Activated T-helper 1 cell treated with anti-CD3 and anti-CD28 coated beads, Interleukin-12 subunit alpha, Interleukin-12 subunit beta, Interleukin-2, Interleukin-4 antibody, amounts not matched to agents 30 ng/mL and 10 ng/mL and 1 ng/mL, durations not matched to agents 14 hours and 24 hours and 36 hours (primary cell): ENCODE measurements at regions of chr5 and their contacts with region 1.

Region 1: GRCh38 chr5:169980418-169981053 is at the start of gene INSYN2B:
- DNase-seq: no peak
- H3K4me3 Mint-ChIP-seq: no peak within 1 kb of the TSS
- H3K27ac Mint-ChIP-seq: no peak within 1 kb of the TSS
- H3K4me1 Mint-ChIP-seq: no peaks in the 10 kb centered on the region
- H3K27me3 Mint-ChIP-seq: no peaks in the 10 kb centered on the region
- total RNA-seq, gene INSYN2B: not detected in 2 replicates

Region 2: GRCh38 chr5:169795338-169795737 is 185.2 kb before region 1 on chr5:
- intact Hi-C with region 1: loop called (anchors 2 kb)
- DNase-seq: no peak
- H3K4me3 Mint-ChIP-seq: no peak overlapping the region
- H3K27ac Mint-ChIP-seq: peak overlapping the region; percentile 2
- H3K4me1 Mint-ChIP-seq: peaks cover 42% of the 10 kb centered on the region
- H3K27me3 Mint-ChIP-seq: no peaks in the 10 kb centered on the region

Region 3: GRCh38 chr5:170826117-170826516 is 845.6 kb after region 1 on chr5:
- intact Hi-C with region 1: no loop called
- DNase-seq: no peak
- H3K4me3 Mint-ChIP-seq: no peak overlapping the region
- H3K27ac Mint-ChIP-seq: no peak overlapping the region
- H3K4me1 Mint-ChIP-seq: no peaks in the 10 kb centered on the region
- H3K27me3 Mint-ChIP-seq: peaks cover 7% of the 10 kb centered on the region